ENCODE measurements at regions of chr5 and their contacts with region 1.

Region 1: GRCh38 chr5:43556857-43557542 is at the start of gene PAIP1:
- DNase-seq: peak; percentile 69 to 75 (median 74)
- H3K4me3 ChIP-seq: peak within 1 kb of the TSS; percentile 69 to 95 (median 91)
- H3K4me3 Mint-ChIP-seq: peak within 1 kb of the TSS; percentile 90 to 93
- H3K27ac ChIP-seq: peak within 1 kb of the TSS; percentile 67 to 89
- H3K27ac Mint-ChIP-seq: peak within 1 kb of the TSS; percentile 81 to 93 (median 91)
- H3K4me1 ChIP-seq: peaks cover 12 to 28% of the 10 kb centered on the region in 2 donors
- H3K4me1 Mint-ChIP-seq: peaks cover 19% of the 10 kb centered on the region
- H3K27me3 ChIP-seq: peaks cover 0 to 2% of the 10 kb centered on the region in 2 donors
- H3K27me3 Mint-ChIP-seq: peaks cover 0 to 7% (median 3%) of the 10 kb centered on the region in 3 donors
- CTCF ChIP-seq: peak; percentile 98
- polyA plus RNA-seq, gene PAIP1: 31.4 to 49.2 (median 41.0) TPM

Region 2: DNA sequence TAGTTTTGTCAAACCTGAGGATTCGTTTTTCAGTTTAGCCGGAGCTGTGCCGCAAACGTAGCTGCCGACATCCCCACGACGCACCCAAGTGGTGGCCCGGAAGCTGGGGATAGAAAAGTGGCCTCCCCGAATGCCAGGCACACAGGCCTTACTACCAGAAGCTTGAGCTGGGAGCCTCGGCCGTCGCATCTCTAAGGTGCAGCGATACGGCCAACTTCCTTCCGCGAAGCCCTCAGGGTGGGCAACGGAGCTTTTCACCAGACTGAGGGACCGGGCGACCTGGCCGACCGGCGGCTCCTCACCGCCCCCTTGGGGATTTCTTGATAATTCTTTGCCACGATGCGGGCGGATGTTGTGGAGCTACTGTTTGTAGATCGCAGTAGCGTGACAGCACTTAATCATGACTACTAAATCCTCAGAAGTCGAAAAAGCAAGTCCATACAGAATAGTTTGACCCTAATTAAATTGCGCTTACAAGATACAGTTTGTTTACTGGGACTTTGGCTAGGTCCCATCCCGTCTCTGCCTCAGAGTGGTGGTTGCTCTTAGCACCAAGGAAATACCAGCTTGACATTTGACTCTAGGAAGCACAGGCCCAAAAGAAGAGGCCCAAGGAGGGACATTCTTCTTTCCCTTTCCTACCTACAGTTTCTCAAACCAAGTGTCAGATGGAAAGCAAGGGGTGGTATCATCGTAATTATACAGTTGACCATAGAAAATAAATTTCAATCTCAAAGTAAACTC is 72.7 kb before region 1 on chr5:
- intact Hi-C with region 1: loop called in 1 of 2 experiments (anchors 5 kb)
- DNase-seq: peak; percentile 75 to 82 (median 79)
- H3K4me3 ChIP-seq: peak overlapping the region; percentile 57 to 83 (median 62)
- H3K4me3 Mint-ChIP-seq: peak overlapping the region; percentile 97 to 98
- H3K27ac ChIP-seq: peak overlapping the region; percentile 89 to 97
- H3K27ac Mint-ChIP-seq: peak overlapping the region; percentile 95 to 100 (median 99)
- H3K4me1 ChIP-seq: peaks cover 17 to 27% of the 10 kb centered on the region in 2 donors
- H3K4me1 Mint-ChIP-seq: peaks cover 27% of the 10 kb centered on the region
- H3K27me3 ChIP-seq: no peaks in the 10 kb centered on the region
- H3K27me3 Mint-ChIP-seq: peaks cover 0 to 2% (median 0%) of the 10 kb centered on the region in 3 donors
- CTCF ChIP-seq: peak; percentile 89

Region 3: GRCh38 chr5:43573058-43573457 is 16.1 kb after region 1 on chr5:
- intact Hi-C with region 1: no loop called
- DNase-seq: no peak
- H3K4me3 ChIP-seq: no peak overlapping the region
- H3K4me3 Mint-ChIP-seq: no peak overlapping the region
- H3K27ac ChIP-seq: no peak overlapping the region
- H3K27ac Mint-ChIP-seq: no peak overlapping the region
- H3K4me1 ChIP-seq: no peaks in the 10 kb centered on the region
- H3K4me1 Mint-ChIP-seq: no peaks in the 10 kb centered on the region
- H3K27me3 ChIP-seq: no peaks in the 10 kb centered on the region
- H3K27me3 Mint-ChIP-seq: peaks cover 0 to 3% (median 0%) of the 10 kb centered on the region in 3 donors
- CTCF ChIP-seq: no peak

Region 4: DNA sequence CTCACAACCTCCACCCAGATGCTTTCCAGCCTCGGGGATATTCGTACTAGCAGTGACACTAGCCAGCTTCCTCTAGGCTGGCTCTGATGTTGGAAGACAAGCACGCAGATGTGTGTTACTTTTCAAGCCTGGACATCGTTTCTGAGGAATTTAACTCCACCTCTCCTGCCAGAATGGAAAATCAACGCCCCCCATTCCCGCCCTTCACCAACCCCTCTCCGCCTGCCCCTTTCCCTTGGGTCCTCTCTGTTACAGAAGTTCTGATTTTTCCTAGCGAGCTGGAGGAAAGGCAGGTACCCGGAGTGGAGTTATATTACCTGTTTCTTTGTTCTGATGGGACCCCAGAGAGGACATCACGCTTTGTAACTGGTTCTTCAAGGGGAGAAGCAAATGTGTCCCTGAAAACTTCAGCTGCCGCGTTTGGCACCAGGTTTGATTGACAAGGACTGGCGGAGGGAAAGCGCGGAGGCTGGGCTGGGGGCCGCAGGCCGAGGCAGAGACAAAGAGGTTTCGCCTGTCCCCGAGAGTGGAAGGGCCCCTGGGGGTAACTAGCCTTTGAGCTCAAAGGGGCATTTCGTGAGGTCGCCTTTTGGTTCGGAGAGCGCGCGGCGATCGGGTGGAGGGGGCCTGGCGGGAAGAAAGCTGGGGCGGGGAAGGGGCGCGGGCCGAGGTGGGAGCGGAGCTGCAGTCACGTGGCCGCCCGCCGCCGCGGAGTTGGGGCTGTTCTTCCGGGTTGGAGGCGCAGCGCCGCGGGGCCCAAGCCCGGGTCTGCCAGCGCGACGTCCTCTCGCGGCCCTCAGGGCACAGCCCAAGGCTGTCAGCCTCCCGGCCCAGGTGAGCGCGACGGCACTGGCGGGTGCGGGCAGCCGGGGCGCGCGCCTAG is 45.7 kb after region 1 on chr5 and contains the start of gene NNT:
- intact Hi-C with region 1: loop called in 1 of 2 experiments (anchors 5 kb)
- DNase-seq: peak; percentile 48 to 64 (median 57)
- H3K4me3 ChIP-seq: peak within 1 kb of the TSS; percentile 75 to 92 (median 82)
- H3K4me3 Mint-ChIP-seq: peak within 1 kb of the TSS; percentile 99
- H3K27ac ChIP-seq: peak within 1 kb of the TSS; percentile 74 to 90
- H3K27ac Mint-ChIP-seq: peak within 1 kb of the TSS; percentile 89 to 95 (median 94)
- H3K4me1 ChIP-seq: peaks cover 23 to 26% of the 10 kb centered on the region in 2 donors
- H3K4me1 Mint-ChIP-seq: peaks cover 29% of the 10 kb centered on the region
- H3K27me3 ChIP-seq: no peaks in the 10 kb centered on the region
- H3K27me3 Mint-ChIP-seq: peaks cover 0 to 3% (median 1%) of the 10 kb centered on the region in 3 donors
- CTCF ChIP-seq: no peak
- polyA plus RNA-seq, gene NNT: 17.1 to 47.2 (median 41.2) TPM